Activated CD4-positive, alpha-beta memory T cell treated with anti-CD3 and anti-CD28 coated beads for 36 hours (primary cell): ENCODE measurements at regions of chrX and their contacts with region 1.

Region 1: DNA sequence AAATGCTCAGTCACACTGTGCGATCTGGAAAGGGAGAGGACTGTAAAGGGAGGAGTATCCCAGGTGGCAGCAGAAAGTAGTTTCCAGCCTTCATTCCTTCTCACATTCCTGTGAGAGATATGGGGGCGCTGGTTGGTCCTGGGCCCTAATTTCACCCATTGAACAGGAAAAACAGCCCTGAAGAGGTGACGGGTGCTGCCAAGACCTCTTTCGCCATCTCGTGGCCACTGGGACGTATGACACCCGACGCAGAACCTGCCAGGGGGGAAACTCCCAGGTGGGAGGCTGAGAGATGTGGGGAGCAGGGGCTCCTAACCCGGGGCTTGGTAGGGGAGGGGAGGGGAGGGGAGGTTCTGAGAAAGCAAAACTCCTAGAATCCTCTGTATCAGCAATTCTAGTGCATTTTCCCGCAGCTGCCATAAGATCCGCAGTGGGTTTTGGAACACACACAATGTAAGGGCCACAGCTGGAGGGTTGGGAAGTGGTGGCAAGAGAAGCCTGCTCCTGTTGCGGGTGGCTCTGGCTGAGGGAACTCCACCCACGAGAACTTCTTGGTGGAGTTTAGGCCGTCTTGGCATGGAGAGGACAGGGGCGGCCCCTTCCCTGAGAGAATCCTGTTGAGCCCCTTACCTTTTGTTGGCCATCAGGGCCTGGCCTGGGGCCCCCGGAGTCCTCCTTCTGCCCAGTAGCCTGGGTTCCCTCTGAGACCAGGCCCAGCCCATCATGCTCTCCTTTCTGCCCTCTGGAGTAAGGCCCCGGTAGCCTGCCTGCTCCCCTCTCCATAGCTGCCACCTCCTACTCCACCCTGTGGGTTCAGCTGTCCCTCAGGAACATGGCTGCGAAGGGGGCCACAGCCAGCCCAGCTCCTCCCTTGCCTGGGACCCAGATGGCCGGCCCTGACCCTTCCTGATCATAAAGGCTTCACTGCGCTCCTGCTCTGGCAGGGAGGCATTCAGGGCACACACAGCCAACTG is 134.1 kb downstream of the OR13H1 start:
- DNase-seq: peak; percentile 35
- H3K4me3 Mint-ChIP-seq: no peak overlapping the region
- H3K27ac Mint-ChIP-seq: no peak overlapping the region
- H3K4me1 Mint-ChIP-seq: no peaks in the 10 kb centered on the region
- H3K27me3 Mint-ChIP-seq: no peaks in the 10 kb centered on the region

Region 2: DNA sequence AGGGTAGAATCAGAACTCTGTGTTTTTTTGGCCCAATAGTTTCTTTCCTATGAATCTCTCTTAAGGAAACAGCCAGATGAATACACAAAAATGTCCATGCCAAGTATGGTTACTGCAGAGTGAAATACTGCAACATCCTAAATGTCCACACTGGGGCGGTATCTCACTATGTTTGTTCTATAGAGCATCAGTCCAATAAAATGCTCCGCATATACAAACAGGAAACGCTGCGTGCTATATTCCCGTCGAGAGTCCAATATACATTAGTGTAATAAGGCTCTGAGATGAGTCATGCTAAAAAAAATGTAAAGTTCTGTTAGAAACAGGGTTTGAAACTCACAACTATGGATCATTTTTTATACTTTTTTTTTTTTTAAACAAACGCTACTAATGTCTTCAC is 702.0 kb before region 1 on chrX:
- CTCF ChIA-PET with region 1: interaction called, 3 read pairs
- POLR2A ChIA-PET with region 1: no interaction called
- intact Hi-C with region 1: loop called (anchors 1 kb)
- DNase-seq: peak; percentile 27
- H3K4me3 Mint-ChIP-seq: no peak overlapping the region
- H3K27ac Mint-ChIP-seq: no peak overlapping the region
- H3K4me1 Mint-ChIP-seq: no peaks in the 10 kb centered on the region
- H3K27me3 Mint-ChIP-seq: no peaks in the 10 kb centered on the region

Region 3: DNA sequence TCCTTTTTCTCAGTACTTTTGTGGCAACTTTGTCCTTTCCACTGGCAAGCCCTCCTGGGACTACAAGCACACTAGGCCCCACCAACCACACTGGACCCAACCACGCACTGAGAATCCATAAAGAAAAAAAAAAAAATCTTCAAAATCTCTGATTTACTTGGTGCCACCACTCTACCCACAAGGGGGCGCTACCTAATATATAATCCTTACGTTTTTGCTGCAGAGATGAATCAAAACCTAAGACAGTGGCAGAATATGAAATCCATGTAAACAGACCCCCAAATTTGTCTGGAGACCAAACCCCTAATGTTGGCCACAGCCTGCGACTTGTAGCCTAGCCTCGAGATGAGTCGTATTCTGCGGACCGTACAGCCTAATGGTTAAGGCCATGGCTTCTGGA is 683.3 kb before region 1 on chrX:
- CTCF ChIA-PET with region 1: interaction called, 3 read pairs
- POLR2A ChIA-PET with region 1: no interaction called
- intact Hi-C with region 1: loop called (anchors 5 kb)
- DNase-seq: peak; percentile 13
- H3K4me3 Mint-ChIP-seq: no peak overlapping the region
- H3K27ac Mint-ChIP-seq: no peak overlapping the region
- H3K4me1 Mint-ChIP-seq: no peaks in the 10 kb centered on the region
- H3K27me3 Mint-ChIP-seq: no peaks in the 10 kb centered on the region

Region 4: DNA sequence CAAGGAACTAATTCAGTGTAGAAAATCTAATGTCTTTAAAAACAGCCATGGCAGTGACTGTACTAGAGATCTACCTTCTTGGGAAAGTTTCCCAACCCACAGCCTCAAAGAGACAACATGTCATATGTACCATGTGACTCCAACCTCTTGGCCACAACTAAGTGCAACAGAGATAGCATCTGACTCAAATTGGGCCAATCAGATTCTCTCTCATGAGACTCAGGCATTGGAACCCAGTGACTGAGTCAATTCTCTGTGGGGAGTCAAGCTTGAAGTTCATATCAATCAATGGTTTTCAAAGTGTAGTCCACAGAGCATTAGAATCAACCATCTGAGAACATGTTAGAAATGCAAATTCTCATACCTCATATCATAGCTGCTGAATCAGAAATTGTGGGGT is 687.5 kb after region 1 on chrX:
- CTCF ChIA-PET with region 1: no interaction called
- POLR2A ChIA-PET with region 1: no interaction called
- intact Hi-C with region 1: no loop called
- DNase-seq: no peak
- H3K4me3 Mint-ChIP-seq: no peak overlapping the region
- H3K27ac Mint-ChIP-seq: no peak overlapping the region
- H3K4me1 Mint-ChIP-seq: peaks cover 5% of the 10 kb centered on the region
- H3K27me3 Mint-ChIP-seq: no peaks in the 10 kb centered on the region